ENCODE measurements at regions of chr9 and their contacts with region 1.

Region 1: DNA sequence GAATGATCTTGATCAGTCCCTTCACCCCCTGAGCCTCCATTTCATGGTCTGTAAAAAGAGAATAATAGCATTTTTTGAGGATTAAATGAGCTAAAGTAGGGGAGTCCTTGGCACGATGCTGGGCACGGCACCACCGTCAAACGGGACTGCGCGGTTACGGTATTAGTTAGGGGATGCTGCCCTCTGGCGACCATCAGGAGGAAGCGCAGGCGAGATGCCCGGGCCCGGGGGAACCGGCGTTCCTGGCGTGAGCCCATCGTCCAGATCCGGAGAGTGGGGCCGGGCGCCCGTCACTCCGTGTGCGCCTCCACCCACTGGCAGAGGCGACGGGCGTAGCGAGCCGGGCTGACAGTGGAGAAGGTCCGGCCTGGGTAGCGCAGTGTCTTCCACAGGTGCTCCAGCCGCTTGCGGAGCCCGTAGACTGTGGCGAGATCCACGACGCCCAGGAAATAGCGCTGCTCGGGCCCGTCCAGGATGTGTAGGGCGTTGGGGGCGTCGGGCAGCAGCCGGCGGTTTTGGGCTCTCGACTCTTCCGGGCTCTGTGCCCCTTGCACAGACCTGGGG is 4.8 kb upstream of the ST6GALNAC4 start:
- DNase-seq: peak in 2 of 4 donors; percentile 81 to 93
- ATAC-seq: peak; percentile 43
- H3K4me3 ChIP-seq: no peak overlapping the region
- H3K27ac ChIP-seq: no peak overlapping the region
- H3K4me1 ChIP-seq: peaks cover 25 to 51% of the 10 kb centered on the region in 2 donors
- H3K27me3 ChIP-seq: peaks cover 0 to 22% of the 10 kb centered on the region in 2 donors
- CTCF ChIP-seq: peak; percentile 95 to 100

Region 2: DNA sequence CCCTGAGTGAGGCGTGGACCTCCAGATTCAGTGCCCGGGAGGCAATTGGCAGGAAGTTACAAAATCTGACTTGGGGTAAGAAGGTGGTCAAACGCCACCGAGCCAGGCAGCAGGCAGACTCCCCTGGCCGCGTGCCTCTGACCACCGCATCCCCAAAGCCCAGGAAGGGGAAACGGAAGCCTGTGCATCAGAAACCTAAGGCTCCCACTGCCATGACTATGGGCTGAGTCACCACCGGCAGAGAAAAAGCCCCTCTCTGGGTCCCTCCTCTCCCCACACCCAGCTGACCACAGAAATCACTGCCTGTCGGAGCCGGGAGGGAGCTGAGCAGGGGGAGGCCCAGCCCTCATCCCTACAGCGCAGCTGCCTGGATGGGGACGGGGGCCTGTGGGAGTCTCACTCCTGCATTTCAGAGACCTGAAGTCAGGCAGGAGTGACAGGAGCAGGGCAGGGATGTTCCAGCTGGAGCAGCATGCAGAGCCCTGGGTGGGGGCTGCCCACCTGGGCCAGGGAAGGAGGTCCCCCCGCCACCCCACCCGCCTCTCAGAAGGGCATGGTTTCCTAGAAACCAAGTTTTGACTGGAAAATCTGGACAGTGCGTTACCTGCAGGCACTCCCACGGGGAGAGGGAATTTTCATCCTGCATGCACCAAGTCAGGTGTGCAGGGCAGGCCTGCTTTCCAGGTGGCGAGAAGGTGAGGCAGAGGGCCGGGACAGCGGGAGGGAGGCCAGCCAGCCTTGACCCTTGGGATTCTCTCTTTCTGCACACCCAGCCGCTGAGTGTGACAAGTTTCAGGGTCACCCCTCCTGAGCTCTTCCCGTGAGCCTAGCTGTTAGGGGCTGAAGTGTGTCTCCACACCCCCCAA is 402.1 kb before region 1 on chr9:
- intact Hi-C with region 1: loop called in 1 of 2 experiments (anchors 10 kb)
- DNase-seq: peak in 2 of 4 donors; percentile 77 to 80
- ATAC-seq: peak; percentile 59
- H3K4me3 ChIP-seq: no peak overlapping the region
- H3K27ac ChIP-seq: peak overlapping the region; percentile 44 to 72
- H3K4me1 ChIP-seq: peaks cover 27 to 49% of the 10 kb centered on the region in 2 donors
- H3K27me3 ChIP-seq: no peaks in the 10 kb centered on the region
- CTCF ChIP-seq: no peak

Region 3: DNA sequence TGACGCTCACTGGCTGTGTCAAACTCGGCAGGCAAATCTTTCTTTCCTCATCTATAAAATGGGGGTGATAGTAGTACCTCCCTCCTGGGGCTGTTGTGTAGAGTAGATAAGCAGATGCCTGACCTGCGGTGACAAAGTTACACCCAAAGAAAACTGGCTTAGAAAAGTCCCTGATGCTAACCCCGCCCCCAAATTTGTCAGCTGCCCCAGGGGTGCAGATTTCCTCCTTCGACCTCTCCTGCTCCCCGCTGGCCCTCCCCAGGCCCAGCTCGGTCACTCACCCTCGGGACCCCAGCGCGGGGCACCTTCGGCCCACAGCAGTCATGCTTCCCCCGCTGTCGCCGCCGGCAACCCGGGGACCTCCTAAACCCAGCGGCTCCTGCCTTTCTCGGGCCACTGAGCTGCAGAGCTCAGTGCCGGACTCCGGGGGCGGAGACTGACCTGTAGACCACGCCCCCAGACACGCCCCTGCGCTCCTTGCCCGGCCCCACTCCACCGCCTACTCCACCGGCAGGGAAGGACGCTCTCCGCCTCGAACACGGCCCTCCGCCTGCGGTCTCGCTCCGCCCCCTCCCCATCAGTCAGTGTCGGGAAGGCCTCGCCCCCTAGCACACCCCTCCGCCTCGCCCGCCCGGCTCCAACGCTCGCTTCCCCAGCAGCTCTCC is 150.6 kb before region 1 on chr9:
- intact Hi-C with region 1: no loop called
- DNase-seq: peak; percentile 96 to 100 (median 99)
- ATAC-seq: peak; percentile 98
- H3K4me3 ChIP-seq: peak overlapping the region; percentile 43 to 74
- H3K27ac ChIP-seq: peak overlapping the region; percentile 70 to 73
- H3K4me1 ChIP-seq: peaks cover 12 to 81% of the 10 kb centered on the region in 2 donors
- H3K27me3 ChIP-seq: no peaks in the 10 kb centered on the region
- CTCF ChIP-seq: no peak

Region 4: DNA sequence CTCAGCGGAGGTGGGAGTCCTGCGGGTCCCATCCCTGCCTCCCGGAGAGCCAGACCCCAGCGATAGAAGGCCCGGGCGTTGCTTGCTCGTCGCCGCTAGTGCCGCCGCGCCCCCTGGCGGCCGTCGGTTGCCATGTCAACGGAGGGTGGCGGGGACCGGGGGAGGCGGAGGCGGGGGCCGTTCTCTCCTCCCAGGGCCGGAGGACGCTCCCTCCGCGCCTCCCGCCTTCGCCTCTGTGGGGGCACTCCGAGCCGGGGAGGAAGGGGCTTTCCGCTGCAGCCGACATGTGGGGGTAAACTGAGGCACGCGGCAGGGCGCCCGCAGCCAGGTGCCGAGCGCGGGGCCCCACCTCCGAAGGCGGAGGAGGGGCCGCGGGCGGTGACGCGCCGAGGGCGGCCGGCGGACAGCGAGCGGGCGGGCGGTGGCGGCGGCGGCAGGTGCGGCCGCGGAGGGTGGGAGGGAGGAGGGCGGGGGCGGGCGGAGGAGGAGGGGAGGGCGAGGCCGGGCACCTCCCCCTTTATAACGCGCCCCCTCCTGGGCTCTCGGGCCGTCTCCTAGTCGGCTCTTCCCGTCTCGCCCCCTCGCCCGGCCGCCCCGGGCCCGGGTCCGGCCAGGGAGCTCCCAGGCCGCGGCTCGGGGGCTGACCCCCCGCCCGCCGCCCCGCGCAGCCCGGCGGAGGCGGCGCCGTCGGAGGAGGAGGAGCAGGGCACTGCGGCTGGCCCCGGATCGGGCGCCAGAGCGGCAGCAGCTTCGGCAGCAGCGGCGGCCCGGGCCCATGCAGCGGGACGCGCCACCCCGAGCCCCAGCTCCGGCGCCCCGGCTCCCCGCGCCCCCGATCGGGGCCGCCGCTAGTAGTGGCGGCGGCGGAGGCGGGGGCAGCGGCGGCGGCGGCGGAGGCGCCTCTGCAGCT is 136.4 kb before region 1 on chr9:
- intact Hi-C with region 1: loop called in 1 of 2 experiments (anchors 5 kb)
- DNase-seq: peak; percentile 82 to 98 (median 90)
- ATAC-seq: peak; percentile 73
- H3K4me3 ChIP-seq: peak overlapping the region; percentile 96 to 100
- H3K27ac ChIP-seq: peak overlapping the region; percentile 89 to 98
- H3K4me1 ChIP-seq: peaks cover 12 to 86% of the 10 kb centered on the region in 2 donors
- H3K27me3 ChIP-seq: no peaks in the 10 kb centered on the region
- CTCF ChIP-seq: peak; percentile 81 to 96